ENCODE measurements at regions of chr22 and their contacts with region 1.

Region 1: DNA sequence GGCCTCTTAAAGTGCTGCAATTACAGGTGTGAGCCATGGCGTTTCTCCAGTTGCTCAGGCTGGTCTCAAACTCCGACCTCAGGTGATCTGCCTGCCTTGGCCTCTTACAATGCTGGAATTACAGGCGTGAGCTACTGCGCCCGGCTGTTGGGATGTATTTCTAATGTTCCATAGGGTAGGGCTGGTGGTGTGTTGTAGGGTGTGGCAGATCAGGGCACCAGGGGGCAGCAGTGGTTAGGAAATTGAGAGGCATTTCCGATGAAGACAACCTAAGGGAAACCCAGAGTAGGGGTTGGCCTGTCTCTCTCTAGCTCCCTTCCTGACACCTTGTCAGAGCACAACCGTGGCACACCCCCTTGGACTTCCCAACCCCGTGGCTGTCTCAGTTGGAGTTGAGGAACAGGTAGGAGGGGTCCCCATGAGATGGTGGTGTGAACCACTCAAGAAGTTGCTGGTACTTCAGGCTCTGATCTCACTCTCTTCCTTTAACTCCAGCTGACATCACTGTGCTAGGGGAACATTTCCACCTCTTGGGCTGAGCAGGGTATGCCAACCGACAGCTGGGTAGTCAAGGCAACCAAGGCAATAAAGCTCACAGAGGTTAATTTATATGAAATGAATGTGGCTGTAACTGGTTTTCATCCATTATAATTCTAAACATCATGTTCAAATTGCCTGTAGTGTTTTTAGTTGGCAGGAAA is 33.0 kb downstream of the YWHAH start:
- DNase-seq: peak; percentile 76
- ATAC-seq: peak; percentile 83
- H3K4me3 ChIP-seq: no peak overlapping the region
- H3K4me3 Mint-ChIP-seq: no peak overlapping the region
- H3K27ac ChIP-seq: no peak overlapping the region
- H3K27ac Mint-ChIP-seq: no peak overlapping the region
- H3K4me1 ChIP-seq: peaks cover 7 to 13% of the 10 kb centered on the region in 2 donors
- H3K4me1 Mint-ChIP-seq: peaks cover 12% of the 10 kb centered on the region
- H3K27me3 ChIP-seq: no peaks in the 10 kb centered on the region
- H3K27me3 Mint-ChIP-seq: no peaks in the 10 kb centered on the region
- CTCF ChIP-seq: peak; percentile 77

Region 2: DNA sequence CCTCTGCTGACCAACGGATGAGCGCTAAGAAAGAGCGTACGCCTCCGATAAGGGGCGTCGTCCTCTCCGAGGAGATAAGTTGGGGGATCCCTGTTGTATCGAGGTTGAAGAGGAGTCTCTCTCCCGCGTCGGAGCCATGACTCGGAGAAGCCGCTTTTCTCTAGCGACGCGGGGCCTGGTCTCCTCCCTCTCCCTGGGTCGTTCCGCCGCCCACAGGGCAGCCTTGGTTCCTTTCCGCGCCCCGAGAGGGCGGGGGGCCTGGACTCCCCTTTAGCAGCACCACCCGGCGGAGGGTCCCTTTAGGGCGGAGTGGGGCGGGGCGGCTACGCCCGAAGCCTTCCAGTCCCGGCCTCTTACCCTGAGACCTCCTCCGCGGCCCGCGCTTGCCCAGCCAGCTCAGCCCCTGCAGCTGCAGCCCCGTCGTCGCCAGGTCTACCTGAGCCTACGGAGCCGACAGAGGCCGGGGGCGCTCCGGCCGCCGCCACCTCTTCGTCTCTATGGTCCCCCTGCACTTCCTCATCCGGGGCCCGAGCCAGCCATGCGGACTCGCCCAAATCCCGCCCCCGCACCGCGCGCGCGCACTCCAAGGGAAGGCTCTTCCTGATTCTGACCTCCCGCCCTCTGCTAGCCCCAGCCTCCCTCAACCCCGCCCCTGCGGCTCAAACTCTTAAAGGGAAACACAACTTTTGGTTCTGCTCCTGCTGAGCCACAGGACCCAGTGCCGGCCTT is 227.5 kb before region 1 on chr22 and contains the start of gene PRR14L:
- CTCF ChIA-PET with region 1: no interaction called
- POLR2A ChIA-PET with region 1: no interaction called
- intact Hi-C with region 1: no loop called
- DNase-seq: peak; percentile 99
- ATAC-seq: peak; percentile 74
- H3K4me3 ChIP-seq: peak within 1 kb of the TSS; percentile 81 to 95 (median 83)
- H3K4me3 Mint-ChIP-seq: peak within 1 kb of the TSS; percentile 95
- H3K27ac ChIP-seq: peak within 1 kb of the TSS; percentile 72 to 93
- H3K27ac Mint-ChIP-seq: peak within 1 kb of the TSS; percentile 99
- H3K4me1 ChIP-seq: peaks cover 41 to 43% of the 10 kb centered on the region in 2 donors
- H3K4me1 Mint-ChIP-seq: peaks cover 52% of the 10 kb centered on the region
- H3K27me3 ChIP-seq: no peaks in the 10 kb centered on the region
- H3K27me3 Mint-ChIP-seq: no peaks in the 10 kb centered on the region
- CTCF ChIP-seq: peak; percentile 17
- total RNA-seq, gene PRR14L: 69.6 and 78.5 TPM in 2 replicates

Region 3: DNA sequence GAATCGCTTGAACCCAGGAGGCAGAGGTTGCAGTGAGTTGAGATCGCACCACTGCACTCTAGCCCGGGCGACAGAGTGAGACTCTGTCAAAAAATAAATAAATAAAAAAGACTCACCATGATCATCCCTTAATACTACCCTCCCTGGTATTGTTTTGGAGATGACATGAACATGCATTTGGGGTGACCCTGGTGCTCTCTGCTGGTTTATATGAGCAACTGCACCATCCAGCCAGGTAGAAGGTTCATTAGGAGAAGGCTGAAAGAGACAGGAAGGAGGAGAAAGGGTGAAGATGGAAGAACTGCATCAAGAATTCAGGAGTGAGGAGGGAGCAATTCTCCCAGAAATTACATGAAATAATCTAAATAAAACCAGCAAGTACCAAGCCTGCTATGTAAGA is 103.6 kb after region 1 on chr22:
- CTCF ChIA-PET with region 1: interaction called, 27 read pairs
- POLR2A ChIA-PET with region 1: no interaction called
- intact Hi-C with region 1: loop called (anchors 1 kb)
- DNase-seq: peak; percentile 45
- ATAC-seq: peak; percentile 28
- H3K4me3 ChIP-seq: no peak overlapping the region
- H3K4me3 Mint-ChIP-seq: no peak overlapping the region
- H3K27ac ChIP-seq: no peak overlapping the region
- H3K27ac Mint-ChIP-seq: no peak overlapping the region
- H3K4me1 ChIP-seq: no peaks in the 10 kb centered on the region
- H3K4me1 Mint-ChIP-seq: no peaks in the 10 kb centered on the region
- H3K27me3 ChIP-seq: peaks cover 0 to 3% (median 0%) of the 10 kb centered on the region in 4 experiments
- H3K27me3 Mint-ChIP-seq: peaks cover 17% of the 10 kb centered on the region
- CTCF ChIP-seq: peak; percentile 56

Region 4: DNA sequence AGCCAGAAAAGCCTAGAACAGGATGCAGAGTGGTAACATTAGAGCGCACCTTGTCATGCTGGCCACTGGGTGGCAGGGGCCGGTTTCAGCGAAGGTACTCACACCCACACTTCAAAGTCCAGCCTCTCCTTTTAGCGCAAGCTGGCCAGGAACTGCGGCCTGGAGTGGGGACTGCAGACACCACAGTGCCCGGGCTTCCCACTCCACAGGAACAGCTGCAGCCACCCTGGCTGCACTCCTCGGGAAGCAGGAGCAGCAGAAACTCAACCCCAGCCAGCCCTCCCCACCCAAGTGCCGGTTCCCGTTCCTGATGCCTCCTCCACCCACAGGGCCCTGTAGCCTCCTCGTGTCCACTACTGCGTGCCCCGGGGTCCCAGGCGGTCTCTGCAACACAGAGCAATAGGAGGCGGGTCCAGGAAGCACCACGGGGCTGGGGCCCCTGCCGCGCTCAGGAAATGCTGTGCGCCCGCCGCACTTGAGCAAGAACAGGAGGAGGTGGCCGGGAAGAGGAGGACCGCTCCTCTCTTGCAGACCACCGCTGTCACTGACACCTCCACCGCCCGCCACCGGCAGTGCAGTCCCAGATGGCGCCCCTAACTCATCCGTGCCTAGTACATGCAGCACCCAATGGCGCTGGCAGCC is 225.4 kb after region 1 on chr22:
- CTCF ChIA-PET with region 1: no interaction called
- POLR2A ChIA-PET with region 1: no interaction called
- intact Hi-C with region 1: loop called (anchors 1 kb)
- DNase-seq: peak; percentile 28
- ATAC-seq: no peak
- H3K4me3 ChIP-seq: peak overlapping the region in 1 of 5 experiments; percentile 7
- H3K4me3 Mint-ChIP-seq: peak overlapping the region; percentile 30
- H3K27ac ChIP-seq: no peak overlapping the region
- H3K27ac Mint-ChIP-seq: no peak overlapping the region
- H3K4me1 ChIP-seq: peaks cover 6 to 8% of the 10 kb centered on the region in 2 donors
- H3K4me1 Mint-ChIP-seq: peaks cover 4% of the 10 kb centered on the region
- H3K27me3 ChIP-seq: peaks cover 0 to 24% (median 5%) of the 10 kb centered on the region in 4 experiments
- H3K27me3 Mint-ChIP-seq: peaks cover 36% of the 10 kb centered on the region
- CTCF ChIP-seq: peak; percentile 49

Region 5: DNA sequence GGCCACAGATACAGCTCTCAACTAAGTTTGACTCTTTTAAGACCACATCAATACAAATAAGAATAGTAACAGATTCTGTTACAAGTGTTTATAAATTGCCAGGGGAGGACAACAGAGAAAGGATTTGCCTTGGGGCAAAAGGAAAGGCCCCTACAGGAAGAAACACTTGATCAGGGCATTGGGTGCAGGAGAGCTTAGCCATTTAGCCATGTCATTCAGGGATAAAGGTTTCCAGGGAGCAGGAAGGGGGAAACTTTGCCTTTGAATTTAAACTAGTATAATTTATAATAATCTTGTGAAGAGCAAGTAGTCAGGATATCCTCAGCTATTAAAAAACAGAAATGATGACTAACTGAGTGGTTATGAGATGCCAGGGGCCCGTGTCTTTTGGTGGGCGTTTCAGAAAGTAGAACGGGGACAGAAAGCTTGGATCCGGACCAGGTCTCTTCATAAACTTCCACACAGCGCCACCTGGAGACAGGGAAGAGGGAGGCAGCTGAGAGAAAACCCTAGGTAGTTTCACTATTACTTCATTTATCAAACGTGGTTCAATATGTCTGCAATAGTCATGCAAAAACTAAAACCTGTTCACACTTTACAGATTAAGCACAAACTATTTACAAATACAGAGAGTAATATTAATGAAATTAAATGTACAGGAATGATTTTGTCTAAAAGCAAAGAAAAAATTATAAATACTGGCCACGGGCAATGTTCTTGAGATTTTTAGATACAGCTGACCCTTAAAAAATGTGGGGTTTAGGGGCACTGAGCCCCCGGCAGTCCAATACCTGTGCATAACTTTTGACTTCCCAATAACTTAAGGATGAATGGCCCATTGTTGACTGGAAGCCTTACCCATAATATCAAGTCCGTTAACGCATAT is 288.8 kb after region 1 on chr22:
- CTCF ChIA-PET with region 1: interaction called, 26 read pairs
- POLR2A ChIA-PET with region 1: no interaction called
- intact Hi-C with region 1: loop called (anchors 1 kb)
- DNase-seq: peak; percentile 62
- ATAC-seq: peak; percentile 36
- H3K4me3 ChIP-seq: no peak overlapping the region
- H3K4me3 Mint-ChIP-seq: no peak overlapping the region
- H3K27ac ChIP-seq: no peak overlapping the region
- H3K27ac Mint-ChIP-seq: no peak overlapping the region
- H3K4me1 ChIP-seq: no peaks in the 10 kb centered on the region
- H3K4me1 Mint-ChIP-seq: peaks cover 3% of the 10 kb centered on the region
- H3K27me3 ChIP-seq: no peaks in the 10 kb centered on the region
- H3K27me3 Mint-ChIP-seq: peaks cover 4% of the 10 kb centered on the region
- CTCF ChIP-seq: peak; percentile 89

Measured in B cell (primary cell).